Panc1 (cell line): ENCODE measurements at regions of chr17 and their contacts with region 1.

Region 1: DNA sequence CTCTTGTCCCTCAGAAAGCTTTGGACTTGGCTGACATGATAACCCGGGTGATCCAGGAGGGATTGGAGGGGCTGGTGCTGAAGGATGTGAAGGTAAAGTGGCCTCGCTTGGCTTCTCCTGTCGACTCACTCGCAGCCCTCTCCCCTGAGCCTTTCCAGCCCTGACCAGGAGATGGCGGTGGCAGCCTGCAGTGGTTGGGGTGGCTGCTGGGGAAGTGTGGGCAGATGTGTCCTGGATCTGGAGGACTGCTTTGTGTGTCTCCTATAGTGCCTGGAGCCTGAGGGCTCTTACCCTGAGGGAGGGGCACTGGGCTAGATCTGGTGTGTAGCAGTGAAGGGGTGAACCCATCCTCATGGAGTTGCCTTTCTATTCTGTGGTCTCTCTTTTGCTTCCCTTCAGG is 17.9 kb downstream of the LIG3 start:
- DNase-seq: no peak
- ATAC-seq: peak; percentile 92
- H3K4me3 ChIP-seq: no peak overlapping the region
- H3K27ac ChIP-seq: no peak overlapping the region
- H3K4me1 ChIP-seq: no peaks in the 10 kb centered on the region
- H3K27me3 ChIP-seq: no peaks in the 10 kb centered on the region
- CTCF ChIP-seq: peak; percentile 87

Region 2: DNA sequence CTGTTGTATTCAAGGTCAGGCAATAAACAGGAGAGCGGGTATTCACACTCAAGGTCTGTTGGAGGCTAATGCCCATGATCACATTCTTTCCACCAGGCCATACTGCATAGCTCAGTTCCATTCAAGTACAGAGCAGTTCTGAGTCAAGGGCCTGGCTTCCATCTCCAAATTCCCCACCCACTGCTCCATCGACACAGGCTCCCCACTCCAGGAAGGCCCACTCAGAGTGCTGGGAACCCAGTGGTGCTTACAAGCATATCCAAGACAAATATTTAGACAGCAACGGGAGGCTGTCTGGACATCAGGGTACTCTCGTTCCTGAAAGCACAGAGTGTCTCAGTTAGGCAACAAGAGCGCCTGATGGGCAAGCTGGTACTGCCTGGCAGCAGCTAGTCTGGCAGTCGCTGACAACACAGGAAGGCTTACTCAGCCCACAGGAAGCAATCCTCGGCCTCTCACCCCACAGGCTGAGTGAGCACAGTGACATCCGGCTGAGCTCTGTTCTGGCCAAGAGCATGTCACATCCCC is 24.4 kb after region 1 on chr17:
- CTCF ChIA-PET with region 1: no interaction called
- POLR2A ChIA-PET with region 1: interaction called, 10 read pairs
- in situ Hi-C with region 1: no loop called
- intact Hi-C with region 1: no loop called
- DNase-seq: no peak
- ATAC-seq: peak; percentile 89
- H3K4me3 ChIP-seq: no peak overlapping the region
- H3K27ac ChIP-seq: no peak overlapping the region
- H3K4me1 ChIP-seq: peaks cover 8% of the 10 kb centered on the region; the same call in 1 of the 2 replicates
- H3K27me3 ChIP-seq: no peaks in the 10 kb centered on the region
- CTCF ChIP-seq: no peak

Region 3: DNA sequence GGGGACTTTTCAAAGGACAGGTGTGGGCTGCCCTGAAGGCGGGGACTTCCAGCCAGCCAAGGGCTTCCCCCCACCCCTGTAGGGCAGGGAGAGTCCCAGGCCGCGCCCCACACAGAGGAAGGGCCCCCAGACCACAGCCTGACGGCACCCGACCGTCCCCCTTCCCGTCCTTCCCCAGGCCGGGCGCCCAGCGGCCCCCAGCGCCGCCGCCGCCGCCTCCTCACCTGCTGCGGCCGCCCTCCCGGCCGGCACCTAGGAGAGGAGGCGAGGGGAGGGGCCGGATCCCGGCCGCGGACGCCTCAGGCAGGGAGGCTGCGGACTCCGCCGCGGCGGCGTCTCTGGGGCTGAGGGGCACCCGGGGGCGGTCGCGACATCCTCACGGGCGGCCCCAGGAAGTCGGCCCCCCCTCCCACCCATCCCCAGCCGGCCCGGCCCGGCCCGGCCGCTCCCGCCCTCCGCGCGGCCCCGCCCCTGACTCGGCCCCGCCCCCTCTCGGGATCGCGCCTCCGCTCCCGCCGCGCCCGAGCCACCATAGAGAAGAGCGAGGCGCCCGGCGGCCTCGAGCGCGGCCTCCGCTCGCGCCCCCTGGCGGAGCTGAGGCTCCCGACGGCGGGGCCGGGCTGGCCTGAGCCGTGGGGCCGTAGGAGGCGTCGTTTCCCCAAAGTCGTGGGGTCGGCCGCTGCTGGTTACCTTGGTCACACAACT is 90.8 kb after region 1 on chr17:
- CTCF ChIA-PET with region 1: no interaction called
- POLR2A ChIA-PET with region 1: no interaction called
- in situ Hi-C with region 1: no loop called
- intact Hi-C with region 1: loop called (anchors 2 kb)
- DNase-seq: no peak
- ATAC-seq: peak; percentile 92
- H3K4me3 ChIP-seq: peak overlapping the region; percentile 72 to 95
- H3K27ac ChIP-seq: peak overlapping the region; percentile 90
- H3K4me1 ChIP-seq: peaks cover 20% of the 10 kb centered on the region
- H3K27me3 ChIP-seq: no peaks in the 10 kb centered on the region
- CTCF ChIP-seq: peak; percentile 95

Region 4: GRCh38 chr17:35119368-35120165 is 121.4 kb after region 1 on chr17 and contains the start of gene RAD51D:
- CTCF ChIA-PET with region 1: interaction called, 3 read pairs
- POLR2A ChIA-PET with region 1: no interaction called
- in situ Hi-C with region 1: no loop called
- intact Hi-C with region 1: loop called (anchors 2 kb)
- DNase-seq: no peak
- ATAC-seq: peak; percentile 97
- H3K4me3 ChIP-seq: peak within 1 kb of the TSS; percentile 68 to 71
- H3K27ac ChIP-seq: peak within 1 kb of the TSS; percentile 81
- H3K4me1 ChIP-seq: peaks cover 11% of the 10 kb centered on the region; the same call in 1 of the 2 replicates
- H3K27me3 ChIP-seq: no peaks in the 10 kb centered on the region
- CTCF ChIP-seq: peak; percentile 98
- total RNA-seq, gene RAD51D: 25.9 TPM

Region 5: DNA sequence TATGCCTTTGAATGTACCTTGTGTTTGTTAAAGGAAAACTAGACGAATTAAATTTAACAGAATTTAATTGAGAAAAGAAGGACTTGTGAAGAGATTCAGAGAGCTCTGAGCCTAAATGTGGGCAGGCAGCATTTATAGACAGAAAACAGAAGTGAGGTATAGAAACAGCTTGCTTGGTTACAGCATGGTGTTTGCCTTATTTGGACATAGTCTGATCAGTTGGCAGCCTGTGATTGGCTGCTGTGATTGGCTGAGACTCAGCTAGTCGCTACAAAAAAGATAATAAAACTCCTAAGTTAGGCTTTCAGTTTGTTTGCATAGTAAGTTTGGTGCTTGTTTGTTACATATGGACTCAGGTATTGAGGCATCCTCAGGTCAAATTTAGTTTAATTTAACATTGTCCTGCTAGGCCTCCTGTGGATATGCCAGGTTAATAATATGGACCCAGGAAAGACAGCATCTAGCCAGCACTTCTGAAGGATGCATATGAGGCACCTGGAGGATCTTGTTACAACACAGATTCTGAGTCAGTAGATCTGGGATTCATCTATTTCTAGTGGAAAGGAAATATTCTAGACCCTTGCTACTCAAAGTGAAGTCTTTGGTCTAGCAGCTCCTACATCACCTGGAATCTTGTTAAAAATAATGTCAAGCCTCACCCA is 288.0 kb after region 1 on chr17:
- CTCF ChIA-PET with region 1: no interaction called
- POLR2A ChIA-PET with region 1: no interaction called
- in situ Hi-C with region 1: no loop called
- intact Hi-C with region 1: no loop called
- DNase-seq: no peak
- ATAC-seq: no peak
- H3K4me3 ChIP-seq: no peak overlapping the region
- H3K27ac ChIP-seq: no peak overlapping the region
- H3K4me1 ChIP-seq: no peaks in the 10 kb centered on the region
- H3K27me3 ChIP-seq: peaks cover 8% of the 10 kb centered on the region
- CTCF ChIP-seq: no peak

Region 6: DNA sequence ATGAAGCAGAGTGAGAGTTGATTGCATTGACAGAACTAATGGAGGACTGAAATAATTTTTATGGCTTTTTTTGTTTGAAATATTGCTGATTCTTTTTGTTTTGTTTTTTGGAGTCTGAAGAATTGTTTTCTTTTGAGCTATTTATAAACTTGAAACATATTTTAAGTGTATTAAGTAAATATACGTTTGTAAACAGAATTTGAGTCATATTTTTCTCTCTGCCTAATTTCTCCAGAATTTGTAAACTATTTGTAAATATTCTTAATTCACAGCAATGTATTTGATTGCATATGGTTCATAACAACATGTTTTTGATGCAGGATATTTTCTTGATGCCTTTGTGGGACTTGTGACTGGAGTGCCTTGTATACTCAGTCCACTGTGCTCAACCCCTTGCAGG is 324.5 kb after region 1 on chr17:
- CTCF ChIA-PET with region 1: no interaction called
- POLR2A ChIA-PET with region 1: no interaction called
- in situ Hi-C with region 1: no loop called
- intact Hi-C with region 1: no loop called
- DNase-seq: no peak
- ATAC-seq: no peak
- H3K4me3 ChIP-seq: no peak overlapping the region
- H3K27ac ChIP-seq: no peak overlapping the region
- H3K4me1 ChIP-seq: no peaks in the 10 kb centered on the region
- H3K27me3 ChIP-seq: peaks cover 2% of the 10 kb centered on the region; the same call in 1 of the 2 replicates
- CTCF ChIP-seq: no peak